Caco-2 (cell line): ENCODE measurements at regions of chr17 and their contacts with region 1.

Region 1: GRCh38 chr17:4733073-4733531 is 1.9 kb downstream of the MED11 start:
- DNase-seq: no peak
- H3K4me3 ChIP-seq: no peak overlapping the region
- H3K4me3 Mint-ChIP-seq: no peak overlapping the region
- H3K27ac Mint-ChIP-seq: no peak overlapping the region
- H3K4me1 ChIP-seq: 0 out of 2 replicates have a peak, but pooled peaks cover 3% of the 10 kb centered on the region
- H3K4me1 Mint-ChIP-seq: peaks cover 14% of the 10 kb centered on the region
- H3K27me3 ChIP-seq: no peaks in the 10 kb centered on the region
- H3K27me3 Mint-ChIP-seq: no peaks in the 10 kb centered on the region
- CTCF ChIP-seq: peak in 1 of 2 experiments; percentile 16

Region 2: DNA sequence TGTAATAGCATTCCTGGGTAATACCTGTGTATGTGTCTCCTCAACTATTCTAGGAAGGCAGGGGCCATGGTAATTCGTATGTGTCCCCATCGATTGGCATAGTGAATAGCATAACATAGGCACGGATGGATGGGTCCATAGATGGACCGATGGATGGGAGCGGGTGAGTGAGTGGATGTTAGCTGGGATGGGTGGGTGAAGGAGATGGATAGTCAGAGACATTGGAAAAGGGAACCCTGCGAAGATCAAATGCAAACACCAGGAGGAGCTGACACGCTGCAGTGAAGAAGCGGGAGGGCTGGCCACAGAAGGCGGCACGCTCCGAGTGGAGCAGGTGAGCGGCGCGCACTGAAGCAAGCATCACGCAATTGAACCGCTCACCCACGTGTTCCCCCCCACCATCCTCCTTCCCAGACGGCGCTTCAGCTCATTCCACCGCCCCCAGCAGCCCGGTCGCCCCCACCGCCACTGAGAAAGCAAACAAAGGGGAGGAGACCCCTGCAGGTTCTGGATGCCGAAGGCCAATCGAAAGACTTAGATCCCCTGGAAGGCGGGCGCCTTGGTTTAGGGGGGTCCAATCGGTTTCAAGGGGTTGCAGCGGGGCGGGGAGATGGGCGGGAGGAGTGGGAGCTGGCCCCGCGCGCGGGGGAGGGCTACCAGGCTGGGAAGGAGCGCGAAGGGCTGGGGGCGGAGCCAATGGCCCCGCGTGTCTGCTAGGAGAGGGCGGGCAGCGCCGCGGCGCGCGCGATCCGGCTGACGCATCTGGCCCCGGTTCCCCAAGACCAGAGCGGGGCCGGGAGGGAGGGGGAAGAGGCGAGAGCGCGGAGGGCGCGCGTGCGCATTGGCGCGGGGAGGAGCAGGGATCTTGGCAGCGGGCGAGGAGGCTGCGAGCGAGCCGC is 23.1 kb before region 1 on chr17 and contains the start of gene ARRB2:
- CTCF ChIA-PET with region 1: interaction called, 4 read pairs
- POLR2A ChIA-PET with region 1: interaction called, 4 read pairs
- intact Hi-C with region 1: loop called (anchors 1 kb)
- DNase-seq: peak; percentile 95 to 96
- H3K4me3 ChIP-seq: peak within 1 kb of the TSS; percentile 66
- H3K4me3 Mint-ChIP-seq: peak within 1 kb of the TSS; percentile 84
- H3K27ac Mint-ChIP-seq: peak within 1 kb of the TSS; percentile 83
- H3K4me1 ChIP-seq: no peaks in the 10 kb centered on the region; the same call in 1 of the 2 replicates
- H3K4me1 Mint-ChIP-seq: peaks cover 6% of the 10 kb centered on the region
- H3K27me3 ChIP-seq: no peaks in the 10 kb centered on the region
- H3K27me3 Mint-ChIP-seq: no peaks in the 10 kb centered on the region
- CTCF ChIP-seq: peak in 1 of 2 experiments; percentile 45
- total RNA-seq, gene ARRB2: 37.1 and 37.8 TPM in 2 replicates

Region 3: DNA sequence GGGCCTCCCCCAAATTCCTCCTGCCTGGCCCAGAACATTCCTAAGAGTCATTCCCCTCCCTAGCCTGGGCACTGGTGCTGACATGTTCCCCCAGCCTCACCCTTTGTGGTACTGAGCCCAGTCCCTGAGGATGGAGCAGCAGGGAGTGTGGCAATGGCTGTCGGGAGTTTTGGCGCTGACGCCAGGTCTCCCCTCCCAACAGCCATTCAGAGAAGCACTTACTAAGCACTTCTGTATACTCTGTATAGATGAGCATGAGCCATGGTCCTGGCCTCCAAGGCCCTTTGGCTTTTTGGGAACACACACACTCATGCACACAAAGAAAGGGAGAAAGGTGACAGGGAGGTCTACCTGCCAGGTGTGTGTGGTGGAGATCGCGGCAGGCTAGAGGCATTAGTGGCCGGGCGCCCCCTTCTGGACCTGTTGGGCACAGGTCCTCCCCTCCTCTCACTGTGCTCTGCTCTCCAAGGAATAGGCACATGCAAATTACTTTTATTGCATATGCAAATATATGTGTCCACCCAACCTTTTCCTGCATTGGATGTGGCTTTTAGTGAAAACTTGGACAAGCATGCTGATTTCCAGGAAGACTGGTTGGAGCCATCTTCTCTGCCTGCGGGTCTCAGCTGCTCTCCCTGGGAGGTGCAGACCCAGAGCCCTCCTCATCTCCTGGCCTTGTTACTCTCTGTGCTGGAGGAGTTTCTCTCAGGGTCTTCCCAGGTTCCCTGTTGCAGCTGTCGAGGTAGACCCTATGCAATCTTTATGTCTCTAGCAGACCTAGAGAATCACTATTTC is 148.9 kb after region 1 on chr17:
- CTCF ChIA-PET with region 1: no interaction called
- POLR2A ChIA-PET with region 1: no interaction called
- intact Hi-C with region 1: loop called (anchors 1 kb)
- DNase-seq: peak; percentile 60 to 71
- H3K4me3 ChIP-seq: no peak overlapping the region
- H3K4me3 Mint-ChIP-seq: no peak overlapping the region
- H3K27ac Mint-ChIP-seq: no peak overlapping the region
- H3K4me1 ChIP-seq: no peaks in the 10 kb centered on the region
- H3K4me1 Mint-ChIP-seq: no peaks in the 10 kb centered on the region
- H3K27me3 ChIP-seq: no peaks in the 10 kb centered on the region
- H3K27me3 Mint-ChIP-seq: no peaks in the 10 kb centered on the region
- CTCF ChIP-seq: peak; percentile 52 to 68